ENCODE measurements at regions of chr5 and their contacts with region 1.

Region 1: GRCh38 chr5:22577711-22578110 is 275.4 kb downstream of the CDH12 start:
- DNase-seq: no peak
- H3K4me3 ChIP-seq: no peak overlapping the region
- H3K27ac ChIP-seq: no peak overlapping the region
- H3K4me1 ChIP-seq: no peaks in the 10 kb centered on the region
- H3K27me3 ChIP-seq: no peaks in the 10 kb centered on the region
- CTCF ChIP-seq: no peak
- POLR2A ChIP-seq: no peak

Region 2: GRCh38 chr5:22596404-22596970 is 18.8 kb after region 1 on chr5:
- intact Hi-C with region 1: no loop called
- DNase-seq: no peak
- H3K4me3 ChIP-seq: no peak overlapping the region
- H3K27ac ChIP-seq: no peak overlapping the region
- H3K4me1 ChIP-seq: no peaks in the 10 kb centered on the region
- H3K27me3 ChIP-seq: no peaks in the 10 kb centered on the region
- CTCF ChIP-seq: no peak
- POLR2A ChIP-seq: no peak

Region 3: GRCh38 chr5:22965960-22966359 is 388.2 kb after region 1 on chr5:
- intact Hi-C with region 1: loop called (anchors 5 kb)
- DNase-seq: no peak
- H3K4me3 ChIP-seq: no peak overlapping the region
- H3K27ac ChIP-seq: no peak overlapping the region
- H3K4me1 ChIP-seq: no peaks in the 10 kb centered on the region
- H3K27me3 ChIP-seq: no peaks in the 10 kb centered on the region
- CTCF ChIP-seq: no peak
- POLR2A ChIP-seq: no peak

Measured in breast epithelium (tissue), 4 donors.